ENCODE measurements at regions of chr6 and their contacts with region 1.

Region 1: GRCh38 chr6:132483779-132484679 is 28.9 kb downstream of the STX7 start:
- DNase-seq: no peak
- H3K4me3 ChIP-seq: no peak overlapping the region
- H3K27ac ChIP-seq: no peak overlapping the region
- H3K4me1 ChIP-seq: peaks cover 19% of the 10 kb centered on the region
- H3K27me3 ChIP-seq: no peaks in the 10 kb centered on the region
- CTCF ChIP-seq: peak; percentile 69 to 87 (median 76)
- POLR2A ChIP-seq: no peak

Region 2: GRCh38 chr6:132298344-132298949 is 185.6 kb before region 1 on chr6:
- intact Hi-C with region 1: loop called (anchors 10 kb)
- DNase-seq: no peak
- H3K4me3 ChIP-seq: no peak overlapping the region
- H3K27ac ChIP-seq: no peak overlapping the region
- H3K4me1 ChIP-seq: no peaks in the 10 kb centered on the region
- H3K27me3 ChIP-seq: no peaks in the 10 kb centered on the region
- CTCF ChIP-seq: peak in 1 of 3 experiments; percentile 23
- POLR2A ChIP-seq: no peak

Measured in vagina (tissue), 2 donors.